GM12878 (cell line): ENCODE measurements at regions of chr5 and their contacts with region 1.

Region 1: GRCh38 chr5:137997726-137998213 is 35.1 kb downstream of the FAM13B start:
- DNase-seq: peak; percentile 64
- ATAC-seq: peak; percentile 94
- H3K4me3 ChIP-seq: no peak overlapping the region
- H3K27ac ChIP-seq: peak overlapping the region; percentile 61; the same call in 1 of the 2 replicates
- H3K4me1 ChIP-seq: peaks cover 9% of the 10 kb centered on the region
- H3K27me3 ChIP-seq: no peaks in the 10 kb centered on the region
- CTCF ChIP-seq: no peak
- EP300 ChIP-seq: no peak
- POLR2A ChIP-seq: no peak
- RAD21 ChIP-seq: no peak

Region 2: DNA sequence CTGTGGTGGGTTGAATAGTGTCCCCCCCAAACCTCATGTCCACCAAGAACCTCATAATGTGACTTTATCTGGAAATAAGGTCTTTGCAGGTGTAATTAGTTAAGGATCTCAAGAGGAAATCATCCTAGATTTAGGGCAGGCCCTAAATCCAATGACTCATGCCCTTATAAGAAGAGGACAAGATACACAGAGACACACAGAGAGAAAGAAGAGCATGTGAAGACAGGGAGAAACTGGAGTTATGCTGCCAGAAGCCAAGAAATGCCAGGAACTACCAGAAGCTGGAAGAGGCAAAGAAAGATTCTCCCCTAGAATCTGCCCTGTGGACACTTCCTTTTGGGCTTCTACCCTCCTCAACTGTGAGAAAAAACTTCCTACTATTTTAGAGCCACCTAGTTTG is 26.3 kb after region 1 on chr5:
- CTCF ChIA-PET with region 1: interaction called, 12 read pairs
- POLR2A ChIA-PET with region 1: interaction called, 3 read pairs
- RAD21 ChIA-PET with region 1: interaction called, 3 read pairs
- SMC1A ChIA-PET with region 1: interaction called, 9 read pairs
- in situ Hi-C with region 1: no loop called
- intact Hi-C with region 1: no loop called
- DNase-seq: no peak
- ATAC-seq: no peak
- H3K4me3 ChIP-seq: no peak overlapping the region
- H3K27ac ChIP-seq: no peak overlapping the region
- H3K4me1 ChIP-seq: peaks cover 13% of the 10 kb centered on the region
- H3K27me3 ChIP-seq: no peaks in the 10 kb centered on the region
- CTCF ChIP-seq: no peak
- EP300 ChIP-seq: no peak
- POLR2A ChIP-seq: no peak
- RAD21 ChIP-seq: no peak